PC-3 (cell line): ENCODE measurements at regions of chr2 and their contacts with region 1.

Region 1: GRCh38 chr2:146952696-146953095 is 892.1 kb upstream of the ACVR2A start:
- DNase-seq: no peak
- ATAC-seq: no peak
- H3K4me3 ChIP-seq: no peak overlapping the region
- H3K27ac ChIP-seq: no peak overlapping the region
- H3K4me1 ChIP-seq: peaks cover 3% of the 10 kb centered on the region
- H3K27me3 ChIP-seq: no peaks in the 10 kb centered on the region
- CTCF ChIP-seq: no peak

Region 2: GRCh38 chr2:147236601-147237000 is 283.9 kb after region 1 on chr2:
- CTCF ChIA-PET with region 1: no interaction called
- POLR2A ChIA-PET with region 1: no interaction called
- intact Hi-C with region 1: no loop called
- DNase-seq: no peak
- ATAC-seq: no peak
- H3K4me3 ChIP-seq: no peak overlapping the region
- H3K27ac ChIP-seq: no peak overlapping the region
- H3K4me1 ChIP-seq: peaks cover 11% of the 10 kb centered on the region; the same call in 1 of the 2 replicates
- H3K27me3 ChIP-seq: no peaks in the 10 kb centered on the region
- CTCF ChIP-seq: no peak

Region 3: GRCh38 chr2:147433822-147434221 is 481.1 kb after region 1 on chr2:
- CTCF ChIA-PET with region 1: no interaction called
- POLR2A ChIA-PET with region 1: interaction called, 13 read pairs
- intact Hi-C with region 1: no loop called
- DNase-seq: no peak
- ATAC-seq: no peak
- H3K4me3 ChIP-seq: no peak overlapping the region
- H3K27ac ChIP-seq: no peak overlapping the region
- H3K4me1 ChIP-seq: peaks cover under 1% of the 10 kb centered on the region; the same call in 1 of the 2 replicates
- H3K27me3 ChIP-seq: no peaks in the 10 kb centered on the region
- CTCF ChIP-seq: no peak